ENCODE measurements at regions of chr1 and their contacts with region 1.

Region 1: GRCh38 chr1:86068271-86068721 is 88.3 kb downstream of the COL24A1 start:
- DNase-seq: peak; percentile 68
- H3K4me3 ChIP-seq: no peak overlapping the region
- H3K27ac ChIP-seq: peak overlapping the region; percentile 33
- H3K4me1 ChIP-seq: peaks cover 24% of the 10 kb centered on the region
- H3K27me3 ChIP-seq: no peaks in the 10 kb centered on the region
- CTCF ChIP-seq: no peak
- POLR2A ChIP-seq: no peak

Region 2: DNA sequence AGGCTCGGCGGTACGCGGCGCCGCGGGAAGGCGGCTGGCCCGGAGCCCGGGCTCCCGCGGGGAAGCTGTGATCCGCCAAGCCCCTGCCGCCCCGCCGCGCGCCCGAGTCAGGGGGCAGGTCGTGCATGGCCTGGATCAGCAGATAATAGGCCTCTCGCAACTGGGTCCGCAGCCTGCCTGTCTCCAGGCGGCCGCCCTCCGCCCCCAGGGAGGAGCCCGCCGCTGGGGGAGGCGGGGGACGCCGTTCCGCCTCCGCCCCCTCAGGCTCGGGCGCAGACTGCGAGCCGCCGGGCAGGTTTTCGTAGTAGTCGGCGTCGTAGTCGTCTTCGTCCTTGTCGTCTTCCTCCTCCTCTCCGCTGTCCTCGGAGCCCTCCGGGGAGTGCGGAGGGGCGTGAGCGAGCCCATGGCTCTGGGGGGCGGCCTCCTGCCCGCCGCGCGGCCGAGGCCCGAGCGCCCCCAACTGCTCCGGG is 867.4 kb before region 1 on chr1 and contains the start of gene SYDE2:
- CTCF ChIA-PET with region 1: no interaction called
- POLR2A ChIA-PET with region 1: no interaction called
- dilution Hi-C with region 1: no loop called
- intact Hi-C with region 1: loop called (anchors 5 kb)
- DNase-seq: peak; percentile 72
- H3K4me3 ChIP-seq: peak within 1 kb of the TSS; percentile 11 to 66 (median 64)
- H3K27ac ChIP-seq: peak within 1 kb of the TSS; percentile 69
- H3K4me1 ChIP-seq: peaks cover 16% of the 10 kb centered on the region
- H3K27me3 ChIP-seq: peaks cover 0 to 2% of the 10 kb centered on the region in 2 experiments
- CTCF ChIP-seq: no peak
- POLR2A ChIP-seq: peak; percentile 69
- total RNA-seq, gene SYDE2: 2.9 and 3.1 TPM in 2 replicates

Region 3: DNA sequence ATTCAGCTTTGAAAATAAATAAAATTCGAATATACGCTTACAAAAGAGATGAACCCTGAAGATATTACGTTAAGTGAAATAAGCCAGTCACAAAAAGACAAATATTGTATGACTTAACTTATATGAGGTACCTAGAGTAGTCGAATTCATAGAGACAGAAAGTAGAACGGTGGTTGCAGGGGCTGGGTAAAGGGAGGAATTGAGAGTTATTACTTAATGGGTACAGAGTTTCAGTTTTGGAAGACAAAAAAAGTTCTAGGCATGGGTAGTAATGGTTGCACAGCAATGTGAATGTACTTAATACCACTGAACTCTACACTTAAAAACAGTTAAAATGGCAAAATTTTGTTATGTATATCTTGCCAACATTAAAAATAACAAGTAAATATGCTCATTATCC is 311.4 kb before region 1 on chr1:
- CTCF ChIA-PET with region 1: no interaction called
- POLR2A ChIA-PET with region 1: no interaction called
- dilution Hi-C with region 1: no loop called
- intact Hi-C with region 1: no loop called
- DNase-seq: no peak
- H3K4me3 ChIP-seq: no peak overlapping the region
- H3K27ac ChIP-seq: no peak overlapping the region
- H3K4me1 ChIP-seq: no peaks in the 10 kb centered on the region
- H3K27me3 ChIP-seq: peaks cover 0 to 3% of the 10 kb centered on the region in 2 experiments
- CTCF ChIP-seq: no peak
- POLR2A ChIP-seq: no peak

Region 4: DNA sequence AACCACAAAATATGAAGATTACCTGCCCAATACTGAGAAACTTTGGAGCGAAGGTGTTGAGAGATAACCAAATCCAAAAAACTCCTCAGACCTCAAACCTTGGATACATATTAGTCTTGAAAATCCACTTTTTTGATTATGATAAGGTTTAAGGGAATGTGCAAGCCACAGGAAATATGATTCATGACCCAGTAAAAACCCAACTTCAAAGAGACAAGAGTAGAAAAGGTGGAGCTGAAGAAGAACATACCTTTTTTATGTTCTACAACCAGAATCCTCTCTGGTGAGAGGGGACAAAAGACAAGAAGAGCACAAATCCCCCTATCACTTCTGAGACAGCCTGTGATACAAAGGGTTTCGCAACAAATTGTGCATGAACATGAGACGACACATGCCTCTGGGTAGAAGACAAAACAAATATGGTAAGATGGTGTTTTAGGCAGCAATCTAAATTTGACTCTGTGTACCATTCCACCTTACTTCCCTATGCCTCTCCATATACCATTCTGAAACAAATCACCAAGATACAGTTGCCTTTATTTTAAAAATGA is 51.0 kb after region 1 on chr1:
- CTCF ChIA-PET with region 1: no interaction called
- POLR2A ChIA-PET with region 1: no interaction called
- dilution Hi-C with region 1: no loop called
- intact Hi-C with region 1: no loop called
- DNase-seq: no peak
- H3K4me3 ChIP-seq: no peak overlapping the region
- H3K27ac ChIP-seq: no peak overlapping the region
- H3K4me1 ChIP-seq: no peaks in the 10 kb centered on the region
- H3K27me3 ChIP-seq: peaks cover 3 to 8% of the 10 kb centered on the region in 2 experiments
- CTCF ChIP-seq: no peak
- POLR2A ChIP-seq: no peak

Region 5: GRCh38 chr1:86515597-86515996 is 447.3 kb after region 1 on chr1:
- CTCF ChIA-PET with region 1: no interaction called
- POLR2A ChIA-PET with region 1: no interaction called
- dilution Hi-C with region 1: no loop called
- intact Hi-C with region 1: loop called (anchors 10 kb)
- DNase-seq: peak; percentile 67
- H3K4me3 ChIP-seq: no peak overlapping the region
- H3K27ac ChIP-seq: no peak overlapping the region
- H3K4me1 ChIP-seq: no peaks in the 10 kb centered on the region
- H3K27me3 ChIP-seq: no peaks in the 10 kb centered on the region
- CTCF ChIP-seq: peak; percentile 52 to 64
- POLR2A ChIP-seq: no peak

Measured in endothelial cell of umbilical vein (primary cell).